Activated CD4-positive, alpha-beta T cell treated with anti-CD3 and anti-CD28 coated beads for 36 hours (primary cell): ENCODE measurements at regions of chr17 and their contacts with region 1.

Region 1: DNA sequence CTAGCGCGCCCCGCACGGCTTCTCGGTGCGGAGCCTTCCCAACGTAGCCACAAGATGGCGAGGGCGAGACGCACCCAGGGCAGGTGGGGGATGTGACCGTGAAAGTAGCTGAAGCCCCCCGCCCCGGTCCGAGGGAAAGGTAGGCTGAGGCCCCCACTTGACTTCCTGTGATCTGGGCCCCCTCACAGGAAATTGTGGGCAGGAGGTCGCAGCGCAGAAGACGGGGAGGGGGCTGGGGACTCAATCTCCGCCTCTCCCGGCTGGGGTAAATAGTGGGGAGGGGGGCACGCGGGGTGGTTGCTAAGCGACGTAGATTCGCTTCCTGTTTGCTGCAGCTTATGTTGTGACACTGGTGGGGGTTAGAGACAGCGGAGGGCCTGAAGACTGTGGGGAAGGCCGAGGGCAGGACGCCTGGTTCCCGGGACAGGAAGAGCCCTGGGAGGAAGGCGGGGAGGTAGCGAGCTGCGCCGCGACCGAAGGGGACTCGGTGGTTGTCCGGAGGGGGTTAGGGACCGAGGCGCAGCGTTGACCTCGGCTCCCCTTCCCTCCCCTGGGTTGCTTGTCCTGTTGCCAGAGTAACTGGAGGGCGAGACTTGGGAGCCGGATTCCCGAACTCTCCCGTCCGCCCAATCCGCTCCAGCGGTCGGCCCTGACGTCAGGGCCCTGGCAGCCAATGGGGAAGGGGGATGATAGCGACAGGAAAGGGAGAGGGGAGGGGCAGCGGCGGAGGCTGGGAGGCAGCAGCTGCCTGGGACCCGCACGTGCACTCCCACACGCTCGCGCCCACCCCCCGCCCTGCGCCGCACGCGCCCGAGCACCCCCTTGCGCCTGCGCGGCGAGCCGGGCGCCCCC is 1.2 kb downstream of the KDM6B start:
- DNase-seq: peak; percentile 96
- ATAC-seq: peak; percentile 57
- H3K4me3 Mint-ChIP-seq: peak overlapping the region; percentile 93
- H3K27ac Mint-ChIP-seq: peak overlapping the region; percentile 91
- H3K4me1 Mint-ChIP-seq: peaks cover 42% of the 10 kb centered on the region
- H3K27me3 Mint-ChIP-seq: no peaks in the 10 kb centered on the region

Region 2: DNA sequence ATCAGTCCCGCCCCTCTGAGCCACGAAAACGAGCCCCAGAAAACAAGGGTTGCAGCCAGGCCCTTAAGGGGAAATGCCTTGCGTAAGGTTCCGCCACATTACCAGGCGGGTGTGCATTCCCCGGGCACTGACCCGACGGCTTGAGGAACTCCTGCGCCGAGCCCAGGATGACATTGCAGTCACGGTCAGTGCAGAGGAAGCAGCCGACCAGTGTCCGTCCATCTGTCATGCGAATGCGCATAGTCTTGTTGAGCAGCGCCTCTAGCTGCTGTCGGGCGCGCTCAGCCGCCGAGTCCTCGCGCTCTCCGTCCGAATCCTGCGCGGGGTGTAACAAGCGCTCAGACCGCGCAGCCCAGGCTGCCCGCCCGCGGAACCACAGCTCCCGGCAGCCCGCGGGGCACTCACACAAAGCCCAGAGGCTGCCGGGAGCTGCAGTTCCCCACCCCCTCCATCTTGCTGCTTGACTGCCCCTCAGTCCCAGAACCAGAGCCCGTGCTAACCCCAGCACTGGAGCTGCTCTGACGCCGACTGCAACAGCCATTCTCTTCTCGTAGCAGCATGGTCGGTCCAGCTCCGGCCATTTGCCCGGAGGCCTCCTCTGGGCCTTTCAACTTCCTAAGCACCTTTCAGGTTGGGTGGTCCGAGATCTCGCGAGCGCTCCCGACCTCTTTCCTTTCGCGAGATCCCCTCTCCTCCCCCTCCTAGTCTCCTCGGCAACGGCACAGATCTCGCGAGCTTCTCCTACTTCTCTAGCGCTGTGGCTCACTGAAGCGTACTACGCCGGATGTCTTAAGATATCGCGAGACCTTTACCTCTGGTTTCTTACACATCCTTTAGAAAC is 21.9 kb after region 1 on chr17 and contains the start of gene NAA38:
- CTCF ChIA-PET with region 1: interaction called, 20 read pairs
- POLR2A ChIA-PET with region 1: interaction called, 5 read pairs
- intact Hi-C with region 1: loop called (anchors 1 kb)
- DNase-seq: peak; percentile 97
- ATAC-seq: peak; percentile 91
- H3K4me3 Mint-ChIP-seq: no peak within 1 kb of the TSS
- H3K27ac Mint-ChIP-seq: no peak within 1 kb of the TSS
- H3K4me1 Mint-ChIP-seq: peaks cover 18% of the 10 kb centered on the region
- H3K27me3 Mint-ChIP-seq: no peaks in the 10 kb centered on the region
- total RNA-seq, gene NAA38: 64.7 to 79.8 TPM

Region 3: DNA sequence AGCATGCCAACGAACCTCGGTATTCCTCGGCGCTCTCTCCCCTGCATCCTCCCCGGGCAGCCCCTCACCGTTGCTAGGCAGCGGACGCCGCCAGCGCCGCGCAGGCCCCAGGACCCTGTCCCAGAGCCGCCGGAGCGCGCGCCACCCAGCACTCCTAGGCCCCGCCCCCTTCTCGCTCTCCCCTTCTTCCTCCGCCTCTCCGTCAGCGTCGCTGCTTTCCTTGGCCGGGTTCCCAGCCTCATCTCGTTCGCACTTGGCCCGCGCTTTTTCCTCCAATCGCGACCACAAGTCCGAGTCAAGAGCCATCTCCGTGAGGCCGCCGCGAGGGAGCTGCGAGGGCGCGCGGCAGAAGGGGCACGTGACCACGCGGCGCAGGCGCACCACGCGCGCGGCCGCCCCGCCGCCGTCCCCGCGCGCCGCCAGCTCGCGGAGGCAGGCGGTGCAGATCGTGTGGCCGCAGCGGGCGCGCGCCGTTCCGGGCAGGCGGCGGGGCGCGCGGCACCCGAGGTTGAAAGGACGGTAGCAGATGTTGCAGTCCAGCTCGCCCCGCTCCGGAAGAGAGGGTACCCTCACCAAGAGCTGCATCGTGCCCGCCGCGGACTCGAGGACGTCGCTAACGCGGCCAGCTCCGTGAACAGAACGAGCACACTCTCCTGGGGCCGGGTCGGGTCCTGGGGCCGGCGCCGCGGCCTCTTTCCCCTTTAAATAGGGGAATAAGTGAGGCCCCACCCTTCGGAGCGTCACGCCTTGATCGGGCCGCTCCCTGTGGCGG is 80.6 kb after region 1 on chr17 and contains the start of gene RNF227:
- CTCF ChIA-PET with region 1: no interaction called
- POLR2A ChIA-PET with region 1: no interaction called
- intact Hi-C with region 1: loop called in 1 of 2 experiments (anchors 2 kb)
- DNase-seq: peak; percentile 95
- ATAC-seq: peak; percentile 88
- H3K4me3 Mint-ChIP-seq: peak within 1 kb of the TSS; percentile 86
- H3K27ac Mint-ChIP-seq: peak within 1 kb of the TSS; percentile 82
- H3K4me1 Mint-ChIP-seq: peaks cover 27% of the 10 kb centered on the region
- H3K27me3 Mint-ChIP-seq: no peaks in the 10 kb centered on the region
- total RNA-seq, gene RNF227: 3.8 to 5.6 TPM

Region 4: GRCh38 chr17:8138672-8139371 is 303.6 kb after region 1 on chr17:
- CTCF ChIA-PET with region 1: no interaction called
- POLR2A ChIA-PET with region 1: no interaction called
- intact Hi-C with region 1: no loop called
- DNase-seq: peak; percentile 98
- ATAC-seq: peak; percentile 90
- H3K4me3 Mint-ChIP-seq: no peak overlapping the region
- H3K27ac Mint-ChIP-seq: no peak overlapping the region
- H3K4me1 Mint-ChIP-seq: no peaks in the 10 kb centered on the region
- H3K27me3 Mint-ChIP-seq: no peaks in the 10 kb centered on the region

Region 5: DNA sequence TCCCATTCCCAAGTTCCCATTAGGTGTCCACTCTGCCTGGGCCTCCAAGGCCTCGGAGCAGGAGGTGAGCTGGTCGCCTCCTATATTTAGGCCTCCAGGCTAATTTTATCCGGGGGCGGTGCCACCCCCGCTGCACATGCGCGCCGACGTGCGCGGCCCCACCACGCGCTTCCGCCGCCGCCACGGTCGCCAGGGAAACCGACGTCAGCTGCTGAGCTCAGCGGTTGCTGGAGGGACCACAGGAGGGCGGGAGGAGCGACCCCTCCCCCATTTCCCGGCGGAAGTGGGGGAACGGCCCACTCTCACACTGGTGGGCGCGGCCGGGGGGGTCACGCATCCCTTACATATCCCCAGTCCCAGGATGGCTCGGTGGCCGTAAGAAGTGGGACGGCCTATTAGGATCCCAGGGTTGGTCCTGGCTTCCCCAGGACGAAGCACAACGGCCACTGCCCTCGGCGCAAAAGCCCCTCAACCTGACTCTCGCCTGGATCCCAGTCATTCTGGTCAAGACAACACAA is 316.0 kb after region 1 on chr17:
- CTCF ChIA-PET with region 1: no interaction called
- POLR2A ChIA-PET with region 1: no interaction called
- intact Hi-C with region 1: loop called in 1 of 2 experiments (anchors 2 kb)
- DNase-seq: peak; percentile 93
- ATAC-seq: peak; percentile 35
- H3K4me3 Mint-ChIP-seq: no peak overlapping the region
- H3K27ac Mint-ChIP-seq: peak overlapping the region; percentile 80
- H3K4me1 Mint-ChIP-seq: peaks cover 30% of the 10 kb centered on the region
- H3K27me3 Mint-ChIP-seq: no peaks in the 10 kb centered on the region